ENCODE measurements at regions of chr7 and their contacts with region 1.

Region 1: DNA sequence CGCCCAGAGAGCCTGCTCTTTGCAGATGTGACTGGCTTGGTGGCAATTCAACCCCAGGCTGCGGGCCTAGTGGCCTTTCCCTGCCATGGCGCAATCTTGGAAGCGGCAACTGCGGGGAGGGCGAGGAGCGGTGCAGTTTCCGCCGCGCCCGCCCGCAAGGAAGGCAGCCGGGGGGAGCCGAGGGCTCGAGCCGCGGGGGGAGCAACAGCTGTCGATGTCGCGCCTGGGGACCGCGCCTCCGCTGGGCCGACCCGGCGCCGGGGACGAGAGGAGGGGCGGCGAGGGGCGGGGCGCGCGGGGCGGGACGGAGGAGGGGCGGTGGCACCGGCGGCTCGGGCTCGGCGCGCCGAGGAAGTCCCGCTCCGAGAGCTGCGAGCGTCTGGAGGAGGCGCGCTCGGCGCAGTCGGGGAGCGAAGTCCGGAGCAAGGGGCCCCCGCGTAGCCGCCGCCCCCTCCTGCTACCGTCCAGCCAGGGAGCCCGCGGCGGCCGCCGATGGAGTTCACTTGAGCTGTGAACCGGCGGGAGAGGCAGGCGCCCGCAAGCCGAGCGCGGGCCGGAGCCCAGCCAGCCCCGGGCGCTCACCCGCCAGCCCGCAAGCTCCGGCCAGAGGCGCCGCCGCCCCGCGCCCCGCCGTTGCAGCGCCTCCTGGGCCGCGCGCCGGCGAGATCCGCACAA is 438.1 kb upstream of the GALNT17 start:
- DNase-seq: peak; percentile 92

Region 2: GRCh38 chr7:70040970-70041766 is 652.7 kb before region 1 on chr7:
- intact Hi-C with region 1: loop called in 1 of 2 experiments (anchors 5 kb)
- DNase-seq: no peak

Region 3: DNA sequence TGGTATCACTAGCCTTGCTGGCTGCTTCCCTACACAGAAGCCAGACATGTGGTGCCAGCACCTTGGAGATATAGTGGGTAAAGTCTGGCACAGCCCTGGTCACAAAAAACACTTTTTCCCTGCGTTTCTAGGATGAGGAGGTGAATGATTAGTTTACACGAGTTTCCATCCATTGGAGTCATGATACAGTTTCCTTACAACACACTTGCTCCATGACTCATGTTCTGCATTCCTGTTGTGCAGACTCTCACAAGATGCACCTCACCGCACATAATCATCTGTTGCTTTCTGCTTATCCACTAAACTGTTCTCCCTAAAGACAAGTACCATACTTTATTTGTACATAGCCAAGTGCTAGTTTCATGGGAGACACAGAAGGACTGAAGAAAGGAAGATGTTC is 308.9 kb before region 1 on chr7:
- intact Hi-C with region 1: no loop called
- DNase-seq: no peak

Region 4: DNA sequence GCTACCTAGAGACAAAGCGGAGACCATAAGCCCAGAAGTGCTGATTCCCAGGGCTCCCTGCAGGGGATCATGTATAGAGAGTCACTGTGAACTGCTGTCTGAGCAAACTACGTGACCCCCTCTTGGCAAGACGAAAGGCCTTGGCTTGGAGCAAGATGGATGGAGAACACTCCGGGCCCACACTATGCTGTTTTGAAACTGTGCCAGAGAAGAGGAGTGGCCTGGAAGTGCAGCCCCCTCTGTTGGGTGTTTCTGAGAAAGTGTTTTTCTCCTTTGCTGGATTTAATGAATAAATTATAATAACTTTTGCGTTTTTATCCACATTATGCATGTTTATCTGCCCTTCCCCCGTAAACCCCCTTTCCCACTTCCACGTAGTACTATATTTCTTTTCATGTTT is 201.2 kb before region 1 on chr7:
- intact Hi-C with region 1: no loop called
- DNase-seq: no peak

Region 5: GRCh38 chr7:70725427-70725826 is 31.6 kb after region 1 on chr7:
- intact Hi-C with region 1: loop called in 1 of 2 experiments (anchors 1 kb)
- DNase-seq: no peak

Region 6: GRCh38 chr7:70752794-70753241 is 59.0 kb after region 1 on chr7:
- intact Hi-C with region 1: no loop called
- DNase-seq: no peak

Measured in posterior vena cava (tissue), 2 donors.